ENCODE measurements at regions of chr11 and their contacts with region 1.

Region 1: DNA sequence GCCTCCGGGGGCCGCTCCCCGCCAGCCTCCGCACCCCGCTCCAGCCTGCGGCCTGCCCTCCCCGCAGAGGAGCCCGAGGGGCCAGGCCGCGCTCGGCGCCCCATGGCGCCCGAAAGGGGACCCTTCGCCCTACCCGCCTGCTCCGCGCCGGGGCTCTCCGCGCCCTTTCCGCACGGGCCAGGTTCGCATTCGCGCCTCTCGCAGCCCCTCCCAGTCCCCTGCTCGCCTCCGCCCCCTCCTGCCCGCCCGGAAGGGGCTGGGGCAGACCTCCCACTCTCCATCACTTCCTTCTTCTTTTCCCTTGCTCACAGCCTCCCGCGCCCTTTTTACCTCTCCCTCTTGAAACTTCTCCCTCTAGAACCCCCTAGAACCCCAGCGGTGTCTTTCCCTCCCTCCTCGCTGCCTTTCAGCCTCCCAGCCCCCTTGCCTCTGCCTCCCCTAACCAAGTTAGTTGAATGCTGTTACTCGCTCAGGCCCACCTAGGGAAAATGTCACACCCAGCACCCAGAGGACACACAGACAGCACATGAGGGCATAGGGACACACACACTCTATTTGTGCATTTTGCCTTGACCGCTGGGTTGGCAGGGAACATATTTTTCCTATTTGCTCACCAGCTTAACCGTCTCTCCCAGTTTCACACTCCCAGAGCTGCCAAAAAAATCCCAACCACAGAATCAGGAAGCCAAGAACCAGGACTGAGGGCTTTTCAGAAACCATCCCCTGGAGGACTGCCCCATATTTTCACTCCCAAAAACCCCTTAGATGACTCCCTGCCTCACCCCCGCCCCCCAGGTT is at the start of gene SLC43A3:
- DNase-seq: peak; percentile 76
- H3K4me3 Mint-ChIP-seq: peak within 1 kb of the TSS; percentile 88
- H3K27ac Mint-ChIP-seq: peak within 1 kb of the TSS; percentile 92
- H3K4me1 Mint-ChIP-seq: peaks cover 56% of the 10 kb centered on the region
- H3K27me3 Mint-ChIP-seq: peaks cover 12% of the 10 kb centered on the region
- total RNA-seq, gene SLC43A3: 94.5 to 101 TPM

Region 2: DNA sequence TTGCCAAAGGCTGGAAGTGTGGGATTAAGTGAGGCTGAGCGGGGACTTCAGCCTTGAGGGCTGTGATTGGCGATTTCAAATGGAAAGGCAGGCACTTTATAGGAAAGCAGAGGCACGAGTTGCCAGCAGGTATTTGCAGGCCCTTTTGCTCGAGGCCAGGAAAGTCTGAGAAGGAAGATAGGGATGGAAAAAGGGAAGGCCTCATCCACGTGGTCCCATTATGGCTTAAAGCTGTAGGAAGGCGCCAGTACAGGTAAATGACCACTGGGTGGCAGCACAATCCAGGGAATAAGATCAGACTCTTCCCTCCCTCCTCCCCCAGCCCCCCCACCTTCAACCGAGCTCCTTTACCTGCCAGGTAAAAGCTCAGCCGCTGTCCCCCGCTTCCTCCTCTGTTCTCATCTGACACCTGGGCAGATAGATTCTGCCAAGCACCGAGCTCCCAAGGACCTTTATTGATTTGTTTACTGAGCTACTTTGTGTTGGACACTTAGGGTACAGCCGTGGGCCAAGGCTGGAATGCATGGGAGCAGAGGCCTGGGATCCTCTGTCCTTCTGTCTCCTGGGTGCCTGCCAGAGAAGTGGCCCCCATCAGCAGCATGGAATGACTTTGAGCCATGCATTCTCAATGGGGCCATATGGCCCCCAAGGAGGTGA is 81.4 kb before region 1 on chr11:
- CTCF ChIA-PET with region 1: interaction called, 10 read pairs
- POLR2A ChIA-PET with region 1: interaction called, 3 read pairs
- DNase-seq: peak; percentile 67
- H3K4me3 Mint-ChIP-seq: no peak overlapping the region
- H3K27ac Mint-ChIP-seq: no peak overlapping the region
- H3K4me1 Mint-ChIP-seq: peaks cover 2% of the 10 kb centered on the region
- H3K27me3 Mint-ChIP-seq: peaks cover 5% of the 10 kb centered on the region

Region 3: DNA sequence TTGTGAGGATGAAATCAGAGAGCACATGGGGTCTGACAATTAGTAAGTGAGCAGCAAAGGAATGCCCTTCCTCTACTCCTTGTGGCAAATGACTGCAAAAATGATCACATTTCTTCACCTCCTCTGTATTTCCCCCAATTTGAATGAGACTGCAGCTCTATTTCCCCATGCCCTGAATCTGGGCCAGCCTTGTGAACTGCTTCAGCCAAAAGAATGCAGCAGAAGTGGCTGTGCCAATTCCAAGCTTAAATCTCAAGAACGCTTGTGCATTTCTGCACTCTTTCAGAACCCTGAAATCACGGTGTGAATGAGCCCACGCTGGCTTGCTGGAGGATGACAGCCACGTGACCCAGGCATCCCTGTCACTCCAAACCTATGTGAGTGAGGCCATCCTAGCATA is 10.1 kb before region 1 on chr11:
- CTCF ChIA-PET with region 1: no interaction called
- POLR2A ChIA-PET with region 1: interaction called, 10 read pairs
- DNase-seq: no peak
- H3K4me3 Mint-ChIP-seq: no peak overlapping the region
- H3K27ac Mint-ChIP-seq: no peak overlapping the region
- H3K4me1 Mint-ChIP-seq: peaks cover 42% of the 10 kb centered on the region
- H3K27me3 Mint-ChIP-seq: no peaks in the 10 kb centered on the region

Region 4: DNA sequence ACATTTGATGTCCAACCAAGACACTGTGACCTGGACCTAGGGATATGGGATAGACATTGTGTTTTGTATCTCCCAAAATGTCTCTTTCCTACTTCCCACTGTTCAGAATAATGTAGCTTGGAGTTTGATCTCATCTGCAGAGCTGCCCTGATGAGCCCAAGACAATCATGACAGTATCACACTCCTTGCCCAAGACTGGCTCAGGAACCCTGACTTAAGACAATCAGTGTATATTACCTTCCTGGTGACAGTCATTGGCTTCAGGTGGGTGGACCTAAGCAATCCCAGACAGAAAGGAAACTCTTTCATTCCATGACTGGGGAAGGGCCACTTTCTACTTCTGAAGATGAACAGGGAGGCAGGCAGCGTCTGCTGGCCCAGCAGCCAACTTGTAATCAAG is 18.9 kb after region 1 on chr11:
- CTCF ChIA-PET with region 1: no interaction called
- POLR2A ChIA-PET with region 1: no interaction called
- DNase-seq: no peak
- H3K4me3 Mint-ChIP-seq: no peak overlapping the region
- H3K27ac Mint-ChIP-seq: no peak overlapping the region
- H3K4me1 Mint-ChIP-seq: no peaks in the 10 kb centered on the region
- H3K27me3 Mint-ChIP-seq: peaks cover 19% of the 10 kb centered on the region

Region 5: DNA sequence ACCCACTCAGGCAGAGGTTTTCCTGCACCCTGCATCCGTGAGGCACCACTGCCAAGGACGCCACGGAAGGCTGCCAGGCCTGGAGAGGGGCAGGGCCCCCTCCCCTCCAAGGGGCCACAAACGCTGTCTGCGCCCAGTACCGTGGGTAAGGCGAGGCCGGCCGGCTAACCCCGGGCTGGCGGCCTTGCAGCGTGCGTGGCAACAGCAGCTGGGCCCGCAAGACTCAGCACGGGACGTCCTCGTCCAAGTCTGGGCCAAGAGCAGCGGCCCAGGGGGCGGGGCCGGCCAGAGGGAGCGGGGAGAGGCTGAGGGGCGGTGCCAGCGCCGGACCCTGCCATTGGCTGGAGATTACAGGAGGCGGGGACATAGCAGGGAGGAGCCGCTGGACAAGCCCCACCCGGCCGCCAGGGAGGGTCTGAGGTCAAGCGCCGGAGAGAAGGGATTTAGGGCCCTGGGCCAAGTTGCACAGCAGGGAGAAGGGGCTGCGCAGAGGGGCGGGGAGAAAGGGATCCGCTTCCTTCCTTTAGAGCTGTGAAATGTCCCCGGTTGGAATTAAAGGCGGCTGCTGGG is 72.4 kb after region 1 on chr11:
- CTCF ChIA-PET with region 1: no interaction called
- POLR2A ChIA-PET with region 1: no interaction called
- DNase-seq: no peak
- H3K4me3 Mint-ChIP-seq: no peak overlapping the region
- H3K27ac Mint-ChIP-seq: no peak overlapping the region
- H3K4me1 Mint-ChIP-seq: peaks cover 4% of the 10 kb centered on the region
- H3K27me3 Mint-ChIP-seq: no peaks in the 10 kb centered on the region

Region 6: DNA sequence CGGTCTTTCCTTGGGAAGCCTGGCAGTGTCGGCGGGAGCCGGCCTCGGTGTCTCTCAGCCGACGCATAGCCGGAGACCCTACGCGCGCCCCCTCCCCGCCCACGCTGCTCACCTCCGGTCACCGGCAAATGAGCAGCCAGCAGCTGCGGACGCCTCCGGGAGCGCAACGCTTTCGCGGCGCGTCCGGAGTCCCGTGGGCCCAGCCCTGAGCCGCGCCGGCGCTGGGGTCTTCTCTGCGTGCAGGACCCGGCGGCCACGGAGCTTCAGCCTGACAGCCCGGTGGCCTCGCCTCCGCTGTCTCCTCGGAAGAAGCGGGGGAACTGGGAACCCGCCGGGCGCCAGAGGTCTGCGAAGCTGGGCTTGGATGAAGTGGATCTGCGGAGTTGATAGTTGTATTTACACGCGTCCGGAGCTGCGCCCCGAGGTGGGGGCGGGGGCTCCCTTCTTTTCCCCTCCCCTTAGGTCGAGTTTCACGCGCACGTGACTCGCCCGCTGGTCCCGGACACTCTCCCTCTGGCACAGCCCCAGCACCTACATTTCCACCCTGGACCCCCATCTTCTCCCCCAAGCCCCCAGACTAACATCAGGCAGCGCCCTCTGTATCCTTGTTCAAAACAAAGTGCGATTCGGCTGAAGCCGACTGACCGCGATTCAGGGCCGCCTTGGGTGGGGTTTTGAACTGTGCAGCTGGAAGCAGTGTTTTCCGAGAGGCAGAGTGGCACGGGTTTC is 88.4 kb after region 1 on chr11 and contains the start of gene SLC43A1:
- CTCF ChIA-PET with region 1: no interaction called
- POLR2A ChIA-PET with region 1: interaction called, 19 read pairs
- DNase-seq: peak; percentile 50
- H3K4me3 Mint-ChIP-seq: peak within 1 kb of the TSS; percentile 98
- H3K27ac Mint-ChIP-seq: peak within 1 kb of the TSS; percentile 74
- H3K4me1 Mint-ChIP-seq: peaks cover 32% of the 10 kb centered on the region
- H3K27me3 Mint-ChIP-seq: no peaks in the 10 kb centered on the region
- total RNA-seq, gene SLC43A1: 29.9 to 31.7 TPM

Region 7: DNA sequence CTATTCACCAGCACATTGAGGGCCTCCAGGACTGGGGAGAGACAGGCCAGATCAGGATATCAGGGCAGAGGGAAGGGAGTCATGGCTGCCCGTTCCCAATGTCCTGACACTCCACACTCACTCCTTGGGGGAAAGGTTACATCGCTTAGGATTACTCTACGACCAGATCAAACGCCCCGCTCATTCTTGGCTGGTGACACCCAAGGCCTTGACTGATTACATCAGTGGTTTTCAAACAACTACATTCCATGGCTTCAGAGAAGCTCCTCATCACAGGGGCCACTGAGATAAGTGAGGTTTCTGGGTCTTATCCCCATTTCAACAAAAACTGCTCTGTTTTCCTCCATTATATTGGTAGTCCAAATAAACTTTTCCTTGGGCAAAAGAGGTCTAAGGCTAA is 125.4 kb after region 1 on chr11:
- CTCF ChIA-PET with region 1: no interaction called
- POLR2A ChIA-PET with region 1: no interaction called
- DNase-seq: no peak
- H3K4me3 Mint-ChIP-seq: no peak overlapping the region
- H3K27ac Mint-ChIP-seq: no peak overlapping the region
- H3K4me1 Mint-ChIP-seq: peaks cover 14% of the 10 kb centered on the region
- H3K27me3 Mint-ChIP-seq: no peaks in the 10 kb centered on the region